Mammary epithelial cell (primary cell): ENCODE measurements at regions of chr1 and their contacts with region 1.

Region 1: GRCh38 chr1:214990619-214991018 is 91.9 kb upstream of the KCNK2 start:
- DNase-seq: peak; percentile 87
- H3K4me3 ChIP-seq: no peak overlapping the region
- H3K27ac ChIP-seq: peak overlapping the region; percentile 20
- H3K4me1 ChIP-seq: peaks cover 30% of the 10 kb centered on the region
- H3K27me3 ChIP-seq: no peaks in the 10 kb centered on the region
- CTCF ChIP-seq: no peak

Region 2: DNA sequence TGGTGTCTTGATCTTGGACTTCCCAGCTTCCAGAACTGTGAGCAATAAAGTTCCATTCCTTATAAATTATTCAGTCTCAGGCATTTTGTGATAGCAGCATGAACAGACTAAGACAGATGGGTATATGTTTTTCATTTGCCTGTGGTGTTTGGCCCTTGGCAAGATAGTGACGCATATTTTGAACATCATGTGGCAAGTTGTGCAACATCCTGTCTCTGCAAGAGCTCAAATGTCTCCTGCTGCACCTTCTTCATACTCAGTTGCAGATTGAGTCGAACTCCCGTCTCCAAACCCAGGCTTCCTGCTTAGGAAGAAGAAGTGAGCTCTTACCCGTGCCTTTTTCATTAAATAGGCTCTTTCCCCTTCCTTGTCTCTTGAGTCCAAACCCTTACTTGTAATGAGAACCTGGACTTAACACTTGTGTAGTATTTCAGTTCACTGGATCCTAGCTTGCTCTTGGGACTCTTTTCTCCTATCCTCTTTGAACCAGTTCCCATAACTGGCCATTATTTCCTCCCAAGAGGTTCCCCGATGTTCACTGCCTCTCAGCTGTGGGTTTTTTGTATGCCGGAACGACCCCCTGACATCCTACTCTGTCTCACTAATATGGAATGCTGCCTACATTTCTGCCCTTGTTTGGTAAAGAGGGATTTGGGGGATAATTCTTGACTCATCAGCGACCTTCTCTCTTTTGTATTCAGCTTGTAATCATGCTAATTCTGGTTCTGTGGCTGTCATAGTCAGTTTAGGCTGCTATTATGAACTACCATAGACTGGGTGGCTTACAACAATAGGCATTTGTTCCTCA is 33.1 kb before region 1 on chr1:
- CTCF ChIA-PET with region 1: no interaction called
- dilution Hi-C with region 1: no loop called
- in situ Hi-C with region 1: no loop called
- intact Hi-C with region 1: loop called (anchors 2 kb)
- DNase-seq: peak; percentile 92
- H3K4me3 ChIP-seq: no peak overlapping the region
- H3K27ac ChIP-seq: peak overlapping the region; percentile 42
- H3K4me1 ChIP-seq: peaks cover 17% of the 10 kb centered on the region
- H3K27me3 ChIP-seq: no peaks in the 10 kb centered on the region
- CTCF ChIP-seq: no peak